ENCODE measurements at regions of chr4 and their contacts with region 1.

Region 1: GRCh38 chr4:140153718-140154571 is at the start of gene MAML3:
- DNase-seq: peak; percentile 96
- H3K4me3 ChIP-seq: peak within 1 kb of the TSS; percentile 60 to 89 (median 76)
- H3K27ac ChIP-seq: peak within 1 kb of the TSS; percentile 93 to 99 (median 98)
- H3K4me1 ChIP-seq: peaks cover 0 to 86% (median 46%) of the 10 kb centered on the region in 6 donors
- H3K27me3 ChIP-seq: peaks cover 0 to 67% (median 8%) of the 10 kb centered on the region in 7 donors
- CTCF ChIP-seq: peak in 1 of 11 experiments; percentile 14
- POLR2A ChIP-seq: peak in 2 of 3 donors; percentile 66 to 81
- total RNA-seq, gene MAML3: 6.7 to 18.4 (median 14.7) TPM

Region 2: DNA sequence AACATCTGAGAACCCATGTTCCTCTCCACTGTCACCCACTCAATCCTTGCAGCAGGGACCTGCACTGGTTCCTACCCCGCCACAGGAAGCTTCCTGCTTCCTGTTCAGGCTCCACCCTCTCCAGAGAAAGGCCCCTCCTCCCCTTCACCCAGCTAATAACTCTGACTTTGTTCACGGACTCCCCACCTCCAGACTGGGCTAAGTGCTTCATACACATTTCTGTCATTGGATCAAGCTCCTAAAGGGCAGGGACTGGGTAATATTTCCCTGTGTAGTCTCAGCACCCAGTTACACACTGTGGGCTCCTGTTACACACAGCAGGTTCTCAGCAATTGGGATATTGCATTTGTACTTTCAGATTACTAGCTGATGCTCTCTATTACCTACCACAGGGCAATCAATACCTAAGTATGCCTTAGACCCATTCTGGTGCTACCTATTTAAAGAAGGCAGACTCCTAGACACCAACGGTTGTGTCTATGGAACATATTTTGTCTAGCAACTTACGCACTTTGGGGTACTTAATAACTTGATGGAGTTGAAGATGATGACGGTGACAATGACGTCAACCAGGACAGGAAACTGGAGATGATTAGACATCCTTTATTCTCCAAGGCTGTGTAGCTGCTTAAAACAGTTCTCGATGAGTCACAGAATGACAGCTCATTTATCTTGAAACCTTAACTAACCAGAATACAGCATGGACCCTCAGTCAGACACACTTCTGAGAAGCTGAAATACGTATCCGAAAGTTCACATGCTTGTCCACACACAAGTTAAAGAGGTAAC is 58.1 kb before region 1 on chr4:
- intact Hi-C with region 1: loop called (anchors 1 kb)
- DNase-seq: no peak
- H3K4me3 ChIP-seq: peak overlapping the region in 3 of 8 donors; percentile 6 to 48 (median 7)
- H3K27ac ChIP-seq: peak overlapping the region; percentile 32 to 85 (median 80)
- H3K4me1 ChIP-seq: peaks cover 54 to 100% (median 93%) of the 10 kb centered on the region in 6 donors
- H3K27me3 ChIP-seq: no peaks in the 10 kb centered on the region
- CTCF ChIP-seq: no peak
- POLR2A ChIP-seq: no peak

Region 3: DNA sequence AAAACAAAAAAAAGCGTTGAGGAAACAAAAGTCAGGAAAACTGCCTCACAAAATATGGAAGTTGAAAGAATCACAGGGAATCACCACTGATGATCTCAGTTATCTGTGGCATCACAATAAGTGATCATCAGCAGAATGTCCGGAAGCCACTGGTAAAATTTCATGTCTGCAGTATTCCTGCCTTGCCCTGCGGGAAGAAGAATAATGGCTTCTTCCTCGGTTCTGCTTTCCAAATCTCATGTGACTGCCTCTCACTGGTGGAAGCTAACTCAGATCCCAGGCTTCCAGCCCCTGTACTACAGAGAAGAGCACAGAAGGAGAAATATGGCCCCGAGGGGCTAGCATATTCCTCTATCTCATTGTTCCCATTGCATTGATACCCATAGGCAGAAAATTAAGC is 1054.0 kb after region 1 on chr4:
- intact Hi-C with region 1: no loop called
- DNase-seq: no peak
- H3K4me3 ChIP-seq: no peak overlapping the region
- H3K27ac ChIP-seq: no peak overlapping the region
- H3K4me1 ChIP-seq: no peaks in the 10 kb centered on the region
- H3K27me3 ChIP-seq: peaks cover 0 to 11% (median 0%) of the 10 kb centered on the region in 7 donors
- CTCF ChIP-seq: no peak
- POLR2A ChIP-seq: no peak

Measured in spleen (tissue), 13 donors.